ENCODE measurements at regions of chr19 and their contacts with region 1.

Region 1: GRCh38 chr19:10717356-10718204 is at the start of gene DNM2:
- DNase-seq: peak; percentile 96
- H3K4me3 ChIP-seq: peak within 1 kb of the TSS; percentile 74 to 98
- H3K27ac ChIP-seq: peak within 1 kb of the TSS; percentile 80 to 93
- H3K4me1 ChIP-seq: peaks cover 4 to 13% of the 10 kb centered on the region in 2 experiments; a peak in 1 of 4 replicates
- H3K27me3 ChIP-seq: no peaks in the 10 kb centered on the region
- CTCF ChIP-seq: peak; percentile 86
- EP300 ChIP-seq: no peak
- RAD21 ChIP-seq: peak; percentile 90
- polyA plus RNA-seq, gene DNM2: 52.5 and 53.6 TPM in 2 replicates

Region 2: GRCh38 chr19:10701955-10702525 is 15.5 kb before region 1 on chr19:
- CTCF ChIA-PET with region 1: interaction called, 47 read pairs
- POLR2A ChIA-PET with region 1: interaction called, 7 read pairs
- DNase-seq: peak; percentile 82
- H3K4me3 ChIP-seq: peak overlapping the region; percentile 69 to 70
- H3K27ac ChIP-seq: peak overlapping the region; percentile 45 to 46; a peak in 2 of 4 replicates
- H3K4me1 ChIP-seq: no peaks in the 10 kb centered on the region; a peak in 1 of 4 replicates
- H3K27me3 ChIP-seq: no peaks in the 10 kb centered on the region
- CTCF ChIP-seq: no peak
- EP300 ChIP-seq: no peak
- RAD21 ChIP-seq: peak; percentile 35

Region 3: GRCh38 chr19:10769533-10770491 is 52.2 kb after region 1 on chr19:
- CTCF ChIA-PET with region 1: interaction called, 29 read pairs
- POLR2A ChIA-PET with region 1: interaction called, 5 read pairs
- DNase-seq: peak; percentile 80
- H3K4me3 ChIP-seq: no peak overlapping the region
- H3K27ac ChIP-seq: peak overlapping the region; percentile 38 to 56; a peak in 2 of 4 replicates
- H3K4me1 ChIP-seq: peaks cover 17 to 30% of the 10 kb centered on the region in 2 experiments
- H3K27me3 ChIP-seq: no peaks in the 10 kb centered on the region
- CTCF ChIP-seq: peak; percentile 37
- EP300 ChIP-seq: no peak
- RAD21 ChIP-seq: peak; percentile 76

Region 4: DNA sequence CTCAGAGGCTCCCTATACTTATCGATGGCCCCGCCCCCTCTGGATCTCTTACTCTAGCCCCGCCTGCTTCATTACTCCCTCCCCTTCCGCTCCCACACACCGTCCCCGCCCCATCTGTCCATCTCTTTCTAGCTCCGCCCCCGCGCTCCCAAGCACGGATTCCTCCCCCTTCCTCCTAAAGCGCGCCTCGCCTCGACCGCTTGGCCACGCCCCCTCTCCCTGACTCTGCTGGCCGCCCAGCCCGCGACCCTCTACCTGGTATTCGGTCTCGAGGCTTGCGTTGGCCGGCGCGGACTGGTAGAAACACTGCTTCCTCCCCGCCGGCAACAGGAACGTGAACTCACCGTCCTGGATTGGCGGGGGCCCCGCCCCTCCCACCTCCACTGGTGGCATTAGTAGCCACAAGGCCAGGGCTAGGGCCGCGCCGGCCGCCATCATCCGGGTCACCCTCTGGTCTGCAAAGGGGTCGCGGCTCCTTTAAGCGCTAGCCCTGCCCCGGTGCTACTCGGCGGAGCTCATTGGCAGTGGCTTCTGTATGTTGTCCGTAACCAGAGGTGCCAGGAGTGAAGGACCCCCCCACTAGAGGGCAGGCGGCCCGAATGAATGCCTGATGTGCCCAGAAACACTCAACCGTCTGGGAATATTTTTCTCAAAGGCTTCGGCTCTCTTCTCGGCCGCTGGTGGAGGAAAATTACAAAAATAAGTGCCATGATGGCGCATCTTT is 118.3 kb after region 1 on chr19 and contains the start of gene TMED1:
- CTCF ChIA-PET with region 1: interaction called, 21 read pairs
- POLR2A ChIA-PET with region 1: interaction called, 8 read pairs
- DNase-seq: peak; percentile 99
- H3K4me3 ChIP-seq: peak within 1 kb of the TSS; percentile 73 to 75
- H3K27ac ChIP-seq: peak within 1 kb of the TSS; percentile 97
- H3K4me1 ChIP-seq: peaks cover 0 to 13% of the 10 kb centered on the region in 2 experiments; a peak in 1 of 4 replicates
- H3K27me3 ChIP-seq: no peaks in the 10 kb centered on the region
- CTCF ChIP-seq: peak; percentile 66
- EP300 ChIP-seq: peak in 1 of 2 experiments; percentile 16; a peak in 1 of 4 replicates
- RAD21 ChIP-seq: peak; percentile 71
- polyA plus RNA-seq, gene TMED1: 77.7 and 92.4 TPM in 2 replicates